Endothelial cell of umbilical vein (primary cell): ENCODE measurements at regions of chr21 and their contacts with region 1.

Region 1: GRCh38 chr21:33608559-33608958 is 20.1 kb upstream of the DONSON start:
- DNase-seq: peak; percentile 75
- H3K4me3 ChIP-seq: no peak overlapping the region
- H3K27ac ChIP-seq: peak overlapping the region; percentile 70
- H3K4me1 ChIP-seq: peaks cover 11% of the 10 kb centered on the region
- H3K27me3 ChIP-seq: no peaks in the 10 kb centered on the region
- CTCF ChIP-seq: no peak
- POLR2A ChIP-seq: no peak

Region 2: DNA sequence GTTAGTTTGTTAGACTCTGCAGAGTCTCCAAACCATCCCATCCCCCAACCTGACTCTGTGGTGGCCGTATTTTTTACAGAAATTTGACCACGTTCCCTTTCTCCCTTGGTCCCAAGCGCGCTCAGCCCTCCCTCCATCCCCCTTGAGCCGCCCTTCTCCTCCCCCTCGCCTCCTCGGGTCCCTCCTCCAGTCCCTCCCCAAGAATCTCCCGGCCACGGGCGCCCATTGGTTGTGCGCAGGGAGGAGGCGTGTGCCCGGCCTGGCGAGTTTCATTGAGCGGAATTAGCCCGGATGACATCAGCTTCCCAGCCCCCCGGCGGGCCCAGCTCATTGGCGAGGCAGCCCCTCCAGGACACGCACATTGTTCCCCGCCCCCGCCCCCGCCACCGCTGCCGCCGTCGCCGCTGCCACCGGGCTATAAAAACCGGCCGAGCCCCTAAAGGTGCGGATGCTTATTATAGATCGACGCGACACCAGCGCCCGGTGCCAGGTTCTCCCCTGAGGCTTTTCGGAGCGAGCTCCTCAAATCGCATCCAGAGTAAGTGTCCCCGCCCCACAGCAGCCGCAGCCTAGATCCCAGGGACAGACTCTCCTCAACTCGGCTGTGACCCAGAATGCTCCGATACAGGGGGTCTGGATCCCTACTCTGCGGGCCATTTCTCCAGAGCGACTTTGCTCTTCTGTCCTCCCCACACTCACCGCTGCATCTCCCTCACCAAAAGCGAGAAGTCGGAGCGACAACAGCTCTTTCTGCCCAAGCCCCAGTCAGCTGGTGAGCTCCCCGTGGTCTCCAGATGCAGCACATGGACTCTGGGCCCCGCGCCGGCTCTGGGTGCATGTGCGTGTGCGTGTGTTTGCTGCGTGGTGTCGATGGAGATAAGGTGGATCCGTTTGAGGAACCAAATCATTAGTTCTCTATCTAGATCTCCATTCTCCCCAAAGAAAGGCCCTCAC is 582.8 kb before region 1 on chr21 and contains the start of gene OLIG2:
- CTCF ChIA-PET with region 1: no interaction called
- POLR2A ChIA-PET with region 1: no interaction called
- dilution Hi-C with region 1: no loop called
- intact Hi-C with region 1: no loop called
- DNase-seq: peak; percentile 20
- H3K4me3 ChIP-seq: no peak within 1 kb of the TSS
- H3K27ac ChIP-seq: no peak within 1 kb of the TSS
- H3K4me1 ChIP-seq: peaks cover 3% of the 10 kb centered on the region
- H3K27me3 ChIP-seq: peaks cover 93 to 100% of the 10 kb centered on the region in 2 experiments
- CTCF ChIP-seq: no peak
- POLR2A ChIP-seq: no peak
- total RNA-seq, gene OLIG2: not detected in 2 replicates

Region 3: GRCh38 chr21:33419538-33420123 is 188.9 kb before region 1 on chr21:
- CTCF ChIA-PET with region 1: no interaction called
- POLR2A ChIA-PET with region 1: no interaction called
- dilution Hi-C with region 1: no loop called
- intact Hi-C with region 1: no loop called
- DNase-seq: peak; percentile 82
- H3K4me3 ChIP-seq: no peak overlapping the region
- H3K27ac ChIP-seq: peak overlapping the region; percentile 44
- H3K4me1 ChIP-seq: peaks cover 11% of the 10 kb centered on the region
- H3K27me3 ChIP-seq: no peaks in the 10 kb centered on the region
- CTCF ChIP-seq: no peak
- POLR2A ChIP-seq: no peak

Region 4: GRCh38 chr21:33441489-33442477 is 166.8 kb before region 1 on chr21:
- CTCF ChIA-PET with region 1: interaction called, 13 read pairs
- POLR2A ChIA-PET with region 1: no interaction called
- dilution Hi-C with region 1: no loop called
- intact Hi-C with region 1: no loop called
- DNase-seq: no peak
- H3K4me3 ChIP-seq: no peak overlapping the region
- H3K27ac ChIP-seq: no peak overlapping the region
- H3K4me1 ChIP-seq: no peaks in the 10 kb centered on the region
- H3K27me3 ChIP-seq: no peaks in the 10 kb centered on the region
- CTCF ChIP-seq: no peak
- POLR2A ChIP-seq: no peak

Region 5: GRCh38 chr21:33552093-33552998 is 56.2 kb before region 1 on chr21:
- CTCF ChIA-PET with region 1: interaction called, 12 read pairs
- POLR2A ChIA-PET with region 1: no interaction called
- dilution Hi-C with region 1: no loop called
- intact Hi-C with region 1: no loop called
- DNase-seq: no peak
- H3K4me3 ChIP-seq: no peak overlapping the region
- H3K27ac ChIP-seq: no peak overlapping the region
- H3K4me1 ChIP-seq: no peaks in the 10 kb centered on the region
- H3K27me3 ChIP-seq: no peaks in the 10 kb centered on the region
- CTCF ChIP-seq: no peak
- POLR2A ChIP-seq: no peak

Region 6: DNA sequence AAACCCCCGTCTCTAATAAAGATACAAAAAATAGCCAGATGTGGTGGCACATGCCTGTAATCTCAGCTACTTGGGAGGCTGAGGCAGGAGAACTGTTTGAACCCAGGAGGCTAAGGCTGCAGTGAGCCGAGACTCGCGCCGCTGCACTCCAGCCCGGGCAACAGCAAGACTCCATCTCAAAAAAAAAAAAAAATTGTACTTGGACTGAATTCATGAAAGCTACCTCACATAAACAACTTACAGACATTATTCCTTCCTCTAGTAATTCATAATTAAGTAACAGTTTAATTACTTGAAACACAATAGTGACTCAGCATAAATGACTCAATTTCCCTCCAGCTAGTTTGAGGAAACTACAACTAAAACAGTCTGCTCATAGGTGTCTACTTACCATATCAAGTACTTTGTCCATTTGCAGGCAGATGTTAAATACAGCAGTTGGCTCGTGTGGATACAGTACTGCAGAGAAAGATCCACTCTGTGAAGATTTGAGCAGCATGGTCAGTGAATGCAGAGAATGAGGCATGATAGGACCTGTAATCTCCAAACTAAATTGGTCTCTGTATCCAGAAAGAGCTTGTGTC is 29.5 kb before region 1 on chr21:
- CTCF ChIA-PET with region 1: interaction called, 39 read pairs
- POLR2A ChIA-PET with region 1: no interaction called
- dilution Hi-C with region 1: no loop called
- intact Hi-C with region 1: no loop called
- DNase-seq: peak; percentile 77
- H3K4me3 ChIP-seq: no peak overlapping the region
- H3K27ac ChIP-seq: peak overlapping the region; percentile 43
- H3K4me1 ChIP-seq: peaks cover 10% of the 10 kb centered on the region
- H3K27me3 ChIP-seq: no peaks in the 10 kb centered on the region
- CTCF ChIP-seq: no peak
- POLR2A ChIP-seq: no peak

Region 7: GRCh38 chr21:33619726-33620125 is 11.2 kb after region 1 on chr21:
- CTCF ChIA-PET with region 1: interaction called, 25 read pairs
- POLR2A ChIA-PET with region 1: no interaction called
- dilution Hi-C with region 1: no loop called
- intact Hi-C with region 1: no loop called
- DNase-seq: no peak
- H3K4me3 ChIP-seq: no peak overlapping the region
- H3K27ac ChIP-seq: no peak overlapping the region
- H3K4me1 ChIP-seq: no peaks in the 10 kb centered on the region
- H3K27me3 ChIP-seq: no peaks in the 10 kb centered on the region
- CTCF ChIP-seq: no peak
- POLR2A ChIP-seq: no peak

Region 8: DNA sequence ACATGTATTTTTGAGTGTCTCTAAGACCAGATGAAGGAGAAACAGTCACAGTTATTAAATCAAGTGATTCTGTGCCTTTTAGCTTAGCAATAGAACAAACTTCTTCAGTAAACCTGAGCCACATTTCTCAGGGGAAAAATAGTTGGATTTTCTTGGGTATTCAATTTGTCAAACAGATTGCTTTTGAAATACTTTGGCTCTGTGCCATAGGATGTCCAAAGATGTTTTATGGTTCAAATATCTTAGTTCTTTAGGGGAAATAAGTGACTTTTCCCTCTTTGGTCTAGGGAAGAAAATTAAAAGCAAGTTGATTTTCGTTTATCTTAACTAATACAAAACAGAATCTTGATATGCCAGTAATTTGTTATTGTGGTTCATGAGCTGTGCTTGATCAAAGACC is 181.1 kb after region 1 on chr21:
- CTCF ChIA-PET with region 1: interaction called, 14 read pairs
- POLR2A ChIA-PET with region 1: no interaction called
- dilution Hi-C with region 1: no loop called
- intact Hi-C with region 1: no loop called
- DNase-seq: peak; percentile 29
- H3K4me3 ChIP-seq: no peak overlapping the region
- H3K27ac ChIP-seq: no peak overlapping the region
- H3K4me1 ChIP-seq: peaks cover 12% of the 10 kb centered on the region
- H3K27me3 ChIP-seq: no peaks in the 10 kb centered on the region
- CTCF ChIP-seq: no peak
- POLR2A ChIP-seq: no peak

Region 9: GRCh38 chr21:33901412-33902288 is 293.1 kb after region 1 on chr21:
- CTCF ChIA-PET with region 1: interaction called, 26 read pairs
- POLR2A ChIA-PET with region 1: no interaction called
- dilution Hi-C with region 1: no loop called
- intact Hi-C with region 1: no loop called
- DNase-seq: peak; percentile 56
- H3K4me3 ChIP-seq: no peak overlapping the region
- H3K27ac ChIP-seq: no peak overlapping the region
- H3K4me1 ChIP-seq: peaks cover 24% of the 10 kb centered on the region
- H3K27me3 ChIP-seq: no peaks in the 10 kb centered on the region
- CTCF ChIP-seq: peak; percentile 73 to 78
- POLR2A ChIP-seq: no peak